ENCODE measurements at regions of chr5 and their contacts with region 1.

Region 1: GRCh38 chr5:43305948-43306565 is 7.2 kb downstream of the HMGCS1 start:
- DNase-seq: peak in 4 of 14 experiments; percentile 10 to 73 (median 70)
- ATAC-seq: peak; percentile 85
- H3K4me3 ChIP-seq: no peak overlapping the region
- H3K4me3 Mint-ChIP-seq: no peak overlapping the region
- H3K27ac ChIP-seq: no peak overlapping the region
- H3K27ac Mint-ChIP-seq: peak overlapping the region; percentile 24
- H3K4me1 ChIP-seq: peaks cover 7% of the 10 kb centered on the region
- H3K4me1 Mint-ChIP-seq: peaks cover 43% of the 10 kb centered on the region
- H3K27me3 ChIP-seq: no peaks in the 10 kb centered on the region
- H3K27me3 Mint-ChIP-seq: no peaks in the 10 kb centered on the region
- CTCF ChIP-seq: peak; percentile 71

Region 2: DNA sequence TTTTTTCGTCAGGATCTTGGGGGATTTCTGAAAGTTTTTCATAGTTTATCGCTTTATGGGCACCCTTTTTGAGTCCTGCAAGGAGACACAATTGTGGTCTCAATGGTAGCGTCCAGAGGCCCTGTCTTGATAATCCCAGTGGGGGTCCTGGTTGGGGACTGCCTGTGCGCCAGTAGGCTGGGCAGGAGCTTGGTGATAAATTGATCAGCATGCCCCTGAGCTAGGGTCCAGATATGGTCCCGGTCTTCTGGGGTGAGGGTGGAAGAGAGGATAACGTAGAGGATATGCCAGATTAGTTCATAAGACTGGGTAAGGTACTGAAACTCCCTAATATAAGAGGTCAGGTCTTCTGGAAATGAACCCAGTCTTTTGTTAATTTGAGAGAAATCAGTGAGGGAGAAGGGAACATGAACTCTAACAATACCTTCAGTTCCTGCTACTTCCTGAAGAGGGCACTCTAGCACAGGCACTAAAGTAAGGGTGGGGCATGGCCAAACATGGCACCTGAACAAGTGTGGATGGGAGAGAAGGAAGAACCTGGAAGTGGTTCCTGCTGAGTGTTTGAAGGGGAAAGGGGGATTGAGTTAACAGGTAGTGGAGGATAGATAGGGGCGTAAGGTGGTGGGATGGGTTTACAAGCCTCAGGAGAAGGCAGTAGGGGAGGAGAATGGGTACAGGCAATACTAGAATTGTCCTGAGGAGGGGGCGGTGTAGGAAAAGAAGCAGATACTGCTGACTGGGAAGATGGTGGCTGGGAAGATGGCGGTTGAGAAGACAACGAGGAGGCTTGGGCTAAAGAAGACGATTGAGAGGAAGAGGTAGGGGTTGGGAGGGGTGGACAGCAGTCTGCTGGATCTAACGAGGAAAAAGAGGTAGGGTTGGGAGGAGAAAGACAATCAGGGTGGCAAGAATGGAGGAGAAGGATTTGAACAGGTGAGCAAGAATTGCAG is 232.2 kb before region 1 on chr5:
- CTCF ChIA-PET with region 1: no interaction called
- POLR2A ChIA-PET with region 1: no interaction called
- intact Hi-C with region 1: loop called (anchors 1 to 2 kb)
- DNase-seq: peak in 11 of 14 experiments; percentile 22 to 79 (median 38)
- ATAC-seq: peak; percentile 82
- H3K4me3 ChIP-seq: no peak overlapping the region
- H3K4me3 Mint-ChIP-seq: no peak overlapping the region
- H3K27ac ChIP-seq: no peak overlapping the region
- H3K27ac Mint-ChIP-seq: peak overlapping the region; percentile 27
- H3K4me1 ChIP-seq: peaks cover 43% of the 10 kb centered on the region
- H3K4me1 Mint-ChIP-seq: peaks cover 46% of the 10 kb centered on the region
- H3K27me3 ChIP-seq: no peaks in the 10 kb centered on the region
- H3K27me3 Mint-ChIP-seq: no peaks in the 10 kb centered on the region
- CTCF ChIP-seq: peak; percentile 70

Region 3: GRCh38 chr5:43105369-43106289 is 200.4 kb before region 1 on chr5:
- CTCF ChIA-PET with region 1: no interaction called
- POLR2A ChIA-PET with region 1: interaction called, 4 read pairs
- intact Hi-C with region 1: loop called (anchors 2 kb)
- DNase-seq: peak; percentile 85 to 97 (median 88)
- ATAC-seq: peak; percentile 90
- H3K4me3 ChIP-seq: peak overlapping the region; percentile 51
- H3K4me3 Mint-ChIP-seq: peak overlapping the region; percentile 91
- H3K27ac ChIP-seq: no peak overlapping the region
- H3K27ac Mint-ChIP-seq: peak overlapping the region; percentile 78
- H3K4me1 ChIP-seq: peaks cover 36% of the 10 kb centered on the region
- H3K4me1 Mint-ChIP-seq: peaks cover 41% of the 10 kb centered on the region
- H3K27me3 ChIP-seq: no peaks in the 10 kb centered on the region
- H3K27me3 Mint-ChIP-seq: no peaks in the 10 kb centered on the region
- CTCF ChIP-seq: peak; percentile 100

Region 4: GRCh38 chr5:43401827-43402226 is 95.8 kb after region 1 on chr5:
- CTCF ChIA-PET with region 1: no interaction called
- POLR2A ChIA-PET with region 1: no interaction called
- intact Hi-C with region 1: no loop called
- DNase-seq: no peak
- ATAC-seq: no peak
- H3K4me3 ChIP-seq: no peak overlapping the region
- H3K4me3 Mint-ChIP-seq: no peak overlapping the region
- H3K27ac ChIP-seq: no peak overlapping the region
- H3K27ac Mint-ChIP-seq: no peak overlapping the region
- H3K4me1 ChIP-seq: peaks cover 5% of the 10 kb centered on the region
- H3K4me1 Mint-ChIP-seq: peaks cover 15% of the 10 kb centered on the region
- H3K27me3 ChIP-seq: no peaks in the 10 kb centered on the region
- H3K27me3 Mint-ChIP-seq: no peaks in the 10 kb centered on the region
- CTCF ChIP-seq: no peak

Measured in CD4-positive, alpha-beta T cell (primary cell).